Caco-2 (cell line): ENCODE measurements at regions of chr12 and their contacts with region 1.

Region 1: GRCh38 chr12:120892265-120892664 is 11.9 kb downstream of the SPPL3 start:
- DNase-seq: no peak
- H3K4me3 ChIP-seq: no peak overlapping the region
- H3K4me3 Mint-ChIP-seq: no peak overlapping the region
- H3K27ac Mint-ChIP-seq: no peak overlapping the region
- H3K4me1 ChIP-seq: peaks cover 10% of the 10 kb centered on the region; the same call in 1 of the 2 replicates
- H3K4me1 Mint-ChIP-seq: peaks cover 15% of the 10 kb centered on the region
- H3K27me3 ChIP-seq: no peaks in the 10 kb centered on the region
- H3K27me3 Mint-ChIP-seq: no peaks in the 10 kb centered on the region
- CTCF ChIP-seq: no peak

Region 2: GRCh38 chr12:120686690-120687577 is 205.3 kb before region 1 on chr12 and contains the start of gene MLEC:
- CTCF ChIA-PET with region 1: no interaction called
- POLR2A ChIA-PET with region 1: no interaction called
- intact Hi-C with region 1: no loop called
- DNase-seq: peak; percentile 98 to 99
- H3K4me3 ChIP-seq: peak within 1 kb of the TSS; percentile 90
- H3K4me3 Mint-ChIP-seq: peak within 1 kb of the TSS; percentile 79
- H3K27ac Mint-ChIP-seq: peak within 1 kb of the TSS; percentile 85
- H3K4me1 ChIP-seq: peaks cover 31% of the 10 kb centered on the region
- H3K4me1 Mint-ChIP-seq: peaks cover 17% of the 10 kb centered on the region
- H3K27me3 ChIP-seq: no peaks in the 10 kb centered on the region
- H3K27me3 Mint-ChIP-seq: no peaks in the 10 kb centered on the region
- CTCF ChIP-seq: peak in 1 of 2 experiments; percentile 11
- total RNA-seq, gene MLEC: 143 and 150 TPM in 2 replicates

Region 3: DNA sequence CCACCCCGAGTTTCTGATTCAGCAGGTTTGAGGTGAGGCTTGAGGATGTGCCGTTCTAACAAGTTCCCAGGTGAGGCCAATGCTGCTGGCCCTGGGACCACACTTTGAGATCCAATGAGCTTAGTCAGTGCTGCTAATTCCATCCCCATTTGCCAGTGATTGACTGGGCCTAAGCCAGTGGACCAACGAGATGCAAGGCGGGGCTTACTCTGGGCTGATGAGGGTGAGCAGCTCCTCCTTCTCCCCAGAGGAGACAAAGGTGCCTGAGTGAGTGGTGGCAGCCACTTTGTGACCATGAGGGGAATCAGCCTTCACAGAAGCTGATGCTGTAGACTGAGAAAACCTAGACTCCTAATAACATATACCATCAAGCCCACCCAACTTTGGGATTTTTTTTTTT is 63.0 kb after region 1 on chr12:
- CTCF ChIA-PET with region 1: no interaction called
- POLR2A ChIA-PET with region 1: interaction called, 12 read pairs
- intact Hi-C with region 1: no loop called
- DNase-seq: no peak
- H3K4me3 ChIP-seq: no peak overlapping the region
- H3K4me3 Mint-ChIP-seq: no peak overlapping the region
- H3K27ac Mint-ChIP-seq: no peak overlapping the region
- H3K4me1 ChIP-seq: peaks cover 36% of the 10 kb centered on the region
- H3K4me1 Mint-ChIP-seq: peaks cover 16% of the 10 kb centered on the region
- H3K27me3 ChIP-seq: no peaks in the 10 kb centered on the region
- H3K27me3 Mint-ChIP-seq: no peaks in the 10 kb centered on the region
- CTCF ChIP-seq: no peak

Region 4: GRCh38 chr12:120965534-120966091 is 73.3 kb after region 1 on chr12:
- CTCF ChIA-PET with region 1: no interaction called
- POLR2A ChIA-PET with region 1: no interaction called
- intact Hi-C with region 1: no loop called
- DNase-seq: peak in 1 of 2 experiments; percentile 54
- H3K4me3 ChIP-seq: no peak overlapping the region
- H3K4me3 Mint-ChIP-seq: peak overlapping the region; percentile 16
- H3K27ac Mint-ChIP-seq: peak overlapping the region; percentile 23
- H3K4me1 ChIP-seq: peaks cover 25% of the 10 kb centered on the region
- H3K4me1 Mint-ChIP-seq: peaks cover 13% of the 10 kb centered on the region
- H3K27me3 ChIP-seq: no peaks in the 10 kb centered on the region
- H3K27me3 Mint-ChIP-seq: no peaks in the 10 kb centered on the region
- CTCF ChIP-seq: no peak

Region 5: GRCh38 chr12:121296618-121297434 is 404.6 kb after region 1 on chr12 and contains the start of gene CAMKK2:
- CTCF ChIA-PET with region 1: no interaction called
- POLR2A ChIA-PET with region 1: interaction called, 13 read pairs
- intact Hi-C with region 1: no loop called
- DNase-seq: peak; percentile 88 to 93
- H3K4me3 ChIP-seq: peak within 1 kb of the TSS; percentile 95
- H3K4me3 Mint-ChIP-seq: peak within 1 kb of the TSS; percentile 79
- H3K27ac Mint-ChIP-seq: peak within 1 kb of the TSS; percentile 72
- H3K4me1 ChIP-seq: no peaks in the 10 kb centered on the region
- H3K4me1 Mint-ChIP-seq: no peaks in the 10 kb centered on the region
- H3K27me3 ChIP-seq: no peaks in the 10 kb centered on the region
- H3K27me3 Mint-ChIP-seq: no peaks in the 10 kb centered on the region
- CTCF ChIP-seq: peak in 1 of 2 experiments; percentile 33
- total RNA-seq, gene CAMKK2: 26.9 and 31.0 TPM in 2 replicates